ENCODE measurements at regions of chr15 and their contacts with region 1.

Region 1: GRCh38 chr15:58227706-58228543 is 89.7 kb downstream of the AQP9 start:
- DNase-seq: peak; percentile 75
- H3K4me3 ChIP-seq: no peak overlapping the region
- H3K27ac ChIP-seq: no peak overlapping the region
- H3K4me1 ChIP-seq: no peaks in the 10 kb centered on the region
- CTCF ChIP-seq: peak; percentile 97

Region 2: DNA sequence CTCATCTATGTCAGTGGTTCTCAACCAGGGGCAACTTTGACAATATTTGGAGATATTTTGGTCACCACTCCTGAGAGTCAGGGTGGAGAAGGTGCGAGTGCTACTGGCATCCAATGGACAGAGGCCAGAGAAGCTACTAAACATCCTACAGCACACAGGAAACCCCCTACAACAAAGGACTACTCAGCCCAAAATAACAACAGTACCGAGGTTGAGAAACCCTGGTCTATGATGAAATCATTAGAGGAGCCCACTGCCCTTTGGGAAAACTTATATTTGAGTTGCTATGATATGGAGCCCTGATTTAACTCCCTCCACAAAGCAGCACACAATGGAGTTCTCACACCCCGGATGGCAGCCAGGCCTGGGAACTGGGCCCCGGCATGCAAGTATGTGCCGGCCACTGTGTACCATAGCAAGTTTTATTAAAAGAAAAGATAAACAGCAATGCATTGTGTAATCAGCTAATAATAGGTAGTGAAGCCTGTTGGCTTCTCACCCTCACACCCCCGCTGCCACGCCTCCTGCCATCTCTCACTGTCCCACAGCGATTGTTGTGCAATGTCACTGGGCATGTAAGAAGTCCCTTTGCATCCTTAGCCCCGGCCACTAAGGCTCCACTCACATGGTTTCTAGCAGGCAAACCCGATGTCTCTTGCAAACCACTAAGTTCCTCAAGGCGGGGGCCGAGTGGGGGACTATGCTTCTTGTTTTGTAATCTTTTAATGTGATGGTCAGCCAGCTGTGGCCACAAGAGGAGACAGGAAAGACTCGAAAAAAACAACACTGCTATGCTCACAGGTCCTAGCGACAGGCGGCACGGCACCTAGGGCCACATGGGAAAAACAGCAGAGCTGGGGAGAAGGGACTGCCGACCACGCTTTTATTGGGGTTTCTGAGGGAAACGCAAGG is 20.2 kb after region 1 on chr15:
- CTCF ChIA-PET with region 1: no interaction called
- POLR2A ChIA-PET with region 1: no interaction called
- intact Hi-C with region 1: no loop called
- DNase-seq: no peak
- H3K4me3 ChIP-seq: no peak overlapping the region
- H3K27ac ChIP-seq: no peak overlapping the region
- H3K4me1 ChIP-seq: no peaks in the 10 kb centered on the region
- CTCF ChIP-seq: no peak

Region 3: GRCh38 chr15:58839485-58839884 is 611.6 kb after region 1 on chr15:
- CTCF ChIA-PET with region 1: no interaction called
- POLR2A ChIA-PET with region 1: interaction called, 4 read pairs
- intact Hi-C with region 1: loop called (anchors 10 kb)
- DNase-seq: peak; percentile 27
- H3K4me3 ChIP-seq: no peak overlapping the region
- H3K27ac ChIP-seq: no peak overlapping the region
- H3K4me1 ChIP-seq: no peaks in the 10 kb centered on the region
- CTCF ChIP-seq: peak; percentile 67